Naive thymus-derived CD4-positive, alpha-beta T cell (primary cell): ENCODE measurements at regions of chr1 and their contacts with region 1.

Region 1: DNA sequence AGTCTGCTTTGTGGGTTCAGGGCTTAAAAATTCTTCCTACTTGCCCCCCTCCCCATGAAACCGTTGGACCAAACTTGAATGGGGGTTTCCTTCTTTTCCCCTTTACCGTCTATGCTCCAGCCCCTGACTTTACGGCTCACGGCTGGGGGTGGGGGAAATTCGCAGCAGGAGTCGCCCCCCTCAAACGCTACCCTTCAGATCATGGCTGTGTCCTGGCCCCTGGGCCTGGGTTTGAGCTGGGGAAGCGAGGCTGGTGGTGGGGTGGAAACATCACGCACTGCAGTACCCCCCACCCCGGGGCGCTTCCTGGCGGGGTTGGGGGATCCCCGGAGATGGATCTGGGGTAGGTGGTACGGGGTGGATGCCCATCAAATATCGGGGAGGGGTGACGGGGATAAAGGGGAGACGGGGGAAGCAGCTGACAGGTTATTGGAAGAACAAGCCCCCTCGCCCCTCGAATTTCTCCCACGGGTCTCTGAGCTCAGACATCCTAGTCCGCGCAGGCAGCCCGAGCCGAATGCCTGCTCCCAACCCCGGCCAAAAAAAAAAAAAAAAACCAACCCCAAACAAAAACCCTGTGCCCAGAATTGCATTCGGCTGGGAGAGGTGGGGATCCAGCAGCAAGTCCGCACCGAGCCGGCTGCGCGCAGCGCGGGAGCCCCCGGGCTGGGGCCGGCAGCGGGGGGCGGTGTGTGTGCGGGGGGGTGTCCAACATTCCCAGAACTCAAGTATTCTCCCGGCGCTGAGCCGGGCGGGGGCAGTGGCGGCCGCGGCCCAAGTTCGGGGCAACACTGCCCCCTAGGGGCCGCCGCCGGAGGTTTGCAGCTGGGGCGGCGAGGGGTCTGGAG is 59.0 kb upstream of the ACOT11 start:
- DNase-seq: peak; percentile 54 to 88 (median 73)
- ATAC-seq: peak; percentile 82
- H3K4me3 ChIP-seq: peak overlapping the region; percentile 83
- H3K4me3 Mint-ChIP-seq: peak overlapping the region; percentile 85 to 95 (median 90)
- H3K27ac ChIP-seq: peak overlapping the region; percentile 75
- H3K27ac Mint-ChIP-seq: peak overlapping the region; percentile 51 to 93 (median 78)
- H3K4me1 ChIP-seq: peaks cover 25 to 33% of the 10 kb centered on the region in 2 donors
- H3K4me1 Mint-ChIP-seq: peaks cover 26 to 55% (median 41%) of the 10 kb centered on the region in 7 donors
- H3K27me3 ChIP-seq: no peaks in the 10 kb centered on the region
- H3K27me3 Mint-ChIP-seq: peaks cover 0 to 38% (median 0%) of the 10 kb centered on the region in 5 donors

Region 2: GRCh38 chr1:53945433-53946251 is 543.4 kb before region 1 on chr1 and contains the start of gene IFT25:
- CTCF ChIA-PET with region 1: no interaction called
- POLR2A ChIA-PET with region 1: no interaction called
- intact Hi-C with region 1: loop called (anchors 5 kb)
- DNase-seq: peak; percentile 96 to 100 (median 99)
- ATAC-seq: peak; percentile 92
- H3K4me3 ChIP-seq: peak within 1 kb of the TSS; percentile 70
- H3K4me3 Mint-ChIP-seq: peak within 1 kb of the TSS; percentile 91 to 97 (median 96)
- H3K27ac ChIP-seq: peak within 1 kb of the TSS; percentile 83
- H3K27ac Mint-ChIP-seq: peak within 1 kb of the TSS; percentile 83 to 96 (median 93)
- H3K4me1 ChIP-seq: peaks cover 17 to 30% of the 10 kb centered on the region in 2 donors
- H3K4me1 Mint-ChIP-seq: peaks cover 33 to 64% (median 56%) of the 10 kb centered on the region in 7 donors
- H3K27me3 ChIP-seq: no peaks in the 10 kb centered on the region
- H3K27me3 Mint-ChIP-seq: no peaks in the 10 kb centered on the region
- total RNA-seq, gene IFT25: 17.5 to 59.9 (median 41.3) TPM

Region 3: GRCh38 chr1:54121482-54122134 is 367.4 kb before region 1 on chr1:
- CTCF ChIA-PET with region 1: interaction called, 8 read pairs
- POLR2A ChIA-PET with region 1: no interaction called
- intact Hi-C with region 1: loop called in 1 of 2 experiments (anchors 1 kb)
- DNase-seq: peak; percentile 42 to 75 (median 60)
- ATAC-seq: peak; percentile 81
- H3K4me3 ChIP-seq: no peak overlapping the region
- H3K4me3 Mint-ChIP-seq: peak overlapping the region in 8 of 10 donors; percentile 39 to 74 (median 68)
- H3K27ac ChIP-seq: no peak overlapping the region
- H3K27ac Mint-ChIP-seq: peak overlapping the region in 2 of 9 donors; percentile 14 to 67
- H3K4me1 ChIP-seq: no peaks in the 10 kb centered on the region
- H3K4me1 Mint-ChIP-seq: peaks cover 0 to 13% (median 6%) of the 10 kb centered on the region in 7 donors
- H3K27me3 ChIP-seq: no peaks in the 10 kb centered on the region
- H3K27me3 Mint-ChIP-seq: peaks cover 0 to 7% (median 0%) of the 10 kb centered on the region in 5 donors

Region 4: DNA sequence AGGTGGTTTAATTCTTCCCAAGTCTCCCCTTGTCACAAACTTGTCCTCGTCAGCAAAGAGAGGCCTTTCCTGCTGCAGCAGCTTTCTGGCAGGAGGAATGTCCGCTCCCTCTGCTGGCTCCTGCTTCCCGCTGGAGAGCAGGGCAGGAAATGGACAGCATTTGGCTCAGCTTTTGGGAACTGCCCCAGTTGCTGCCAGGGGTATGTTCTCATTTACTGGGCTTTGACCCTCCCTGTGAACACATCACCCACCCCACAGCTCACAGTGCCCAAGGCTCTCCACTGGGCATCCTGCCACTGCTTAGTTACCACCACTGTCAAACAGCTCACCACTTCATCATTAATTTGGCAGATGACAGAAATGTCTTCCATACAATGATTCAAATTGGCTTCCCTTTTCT is 213.7 kb before region 1 on chr1:
- CTCF ChIA-PET with region 1: interaction called, 3 read pairs
- POLR2A ChIA-PET with region 1: interaction called, 6 read pairs
- intact Hi-C with region 1: loop called in 1 of 2 experiments (anchors 1 kb)
- DNase-seq: no peak
- ATAC-seq: no peak
- H3K4me3 ChIP-seq: no peak overlapping the region
- H3K4me3 Mint-ChIP-seq: peak overlapping the region in 1 of 10 donors; percentile 33
- H3K27ac ChIP-seq: no peak overlapping the region
- H3K27ac Mint-ChIP-seq: peak overlapping the region in 5 of 9 donors; percentile 62 to 83 (median 75)
- H3K4me1 ChIP-seq: peaks cover 0 to 46% of the 10 kb centered on the region in 2 donors
- H3K4me1 Mint-ChIP-seq: peaks cover 25 to 76% (median 64%) of the 10 kb centered on the region in 7 donors
- H3K27me3 ChIP-seq: no peaks in the 10 kb centered on the region
- H3K27me3 Mint-ChIP-seq: no peaks in the 10 kb centered on the region

Region 5: DNA sequence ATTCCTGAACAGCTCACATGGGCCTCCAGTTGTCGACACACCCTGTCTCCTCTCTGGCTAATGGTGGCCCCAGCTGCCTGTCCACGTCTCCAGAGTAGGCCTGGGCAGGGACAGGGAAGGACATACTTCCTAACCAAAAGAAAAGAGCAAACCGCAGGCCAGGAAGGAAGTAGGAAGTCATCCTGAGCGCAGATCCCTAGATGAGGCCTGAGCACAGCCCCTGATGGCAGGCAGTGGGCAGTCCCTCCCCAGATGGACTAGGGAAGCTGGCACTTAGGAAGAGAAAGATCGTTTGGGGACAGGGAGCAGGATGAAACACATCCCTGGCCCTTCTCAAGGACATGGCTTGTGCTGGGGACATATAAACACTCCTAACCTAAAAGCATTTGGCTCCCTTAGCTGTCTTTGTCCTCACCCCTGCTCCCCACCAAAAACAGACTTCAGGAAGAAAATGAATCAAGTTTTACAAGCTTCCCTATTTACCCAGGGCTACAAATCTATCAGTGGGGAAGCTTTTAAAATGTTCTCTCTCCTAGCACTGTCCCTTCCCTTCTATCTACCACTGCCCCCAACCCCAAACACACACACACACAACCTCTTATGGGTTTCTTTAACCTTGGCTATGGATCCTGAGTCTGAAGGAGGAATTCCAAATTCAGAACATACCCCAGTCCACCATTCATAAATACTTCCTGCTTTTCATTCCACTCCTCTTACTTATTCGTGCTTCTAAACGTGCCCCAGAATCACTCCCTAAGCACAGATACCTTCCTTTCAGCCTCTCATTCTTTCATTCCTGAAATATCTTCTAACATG is 103.9 kb before region 1 on chr1:
- CTCF ChIA-PET with region 1: interaction called, 10 read pairs
- POLR2A ChIA-PET with region 1: no interaction called
- intact Hi-C with region 1: no loop called
- DNase-seq: no peak
- ATAC-seq: no peak
- H3K4me3 ChIP-seq: no peak overlapping the region
- H3K4me3 Mint-ChIP-seq: peak overlapping the region in 1 of 10 donors; percentile 18
- H3K27ac ChIP-seq: no peak overlapping the region
- H3K27ac Mint-ChIP-seq: peak overlapping the region; percentile 32 to 82 (median 57)
- H3K4me1 ChIP-seq: peaks cover 0 to 10% of the 10 kb centered on the region in 2 donors
- H3K4me1 Mint-ChIP-seq: peaks cover 32 to 82% (median 74%) of the 10 kb centered on the region in 7 donors
- H3K27me3 ChIP-seq: no peaks in the 10 kb centered on the region
- H3K27me3 Mint-ChIP-seq: no peaks in the 10 kb centered on the region

Region 6: GRCh38 chr1:54715493-54716298 is 226.7 kb after region 1 on chr1 and contains the start of gene TTC4:
- CTCF ChIA-PET with region 1: no interaction called
- POLR2A ChIA-PET with region 1: no interaction called
- intact Hi-C with region 1: loop called in 1 of 2 experiments (anchors 5 kb)
- DNase-seq: peak; percentile 71 to 92 (median 85)
- ATAC-seq: peak; percentile 99
- H3K4me3 ChIP-seq: peak within 1 kb of the TSS; percentile 86
- H3K4me3 Mint-ChIP-seq: peak within 1 kb of the TSS; percentile 81 to 96 (median 88)
- H3K27ac ChIP-seq: peak within 1 kb of the TSS; percentile 84
- H3K27ac Mint-ChIP-seq: peak within 1 kb of the TSS; percentile 58 to 94 (median 91)
- H3K4me1 ChIP-seq: peaks cover 14 to 15% of the 10 kb centered on the region in 2 donors
- H3K4me1 Mint-ChIP-seq: peaks cover 15 to 42% (median 34%) of the 10 kb centered on the region in 7 donors
- H3K27me3 ChIP-seq: no peaks in the 10 kb centered on the region
- H3K27me3 Mint-ChIP-seq: no peaks in the 10 kb centered on the region
- total RNA-seq, gene TTC4: 11.6 to 25.8 (median 21.4) TPM

Region 7: GRCh38 chr1:54810100-54810942 is 321.3 kb after region 1 on chr1:
- CTCF ChIA-PET with region 1: no interaction called
- POLR2A ChIA-PET with region 1: no interaction called
- intact Hi-C with region 1: no loop called
- DNase-seq: peak; percentile 11 to 69 (median 53)
- ATAC-seq: peak; percentile 69
- H3K4me3 ChIP-seq: no peak overlapping the region
- H3K4me3 Mint-ChIP-seq: no peak overlapping the region
- H3K27ac ChIP-seq: no peak overlapping the region
- H3K27ac Mint-ChIP-seq: peak overlapping the region in 1 of 9 donors; percentile 55
- H3K4me1 ChIP-seq: peaks cover 0 to 11% of the 10 kb centered on the region in 2 donors
- H3K4me1 Mint-ChIP-seq: peaks cover 0 to 29% (median 7%) of the 10 kb centered on the region in 7 donors
- H3K27me3 ChIP-seq: no peaks in the 10 kb centered on the region
- H3K27me3 Mint-ChIP-seq: no peaks in the 10 kb centered on the region

Region 8: DNA sequence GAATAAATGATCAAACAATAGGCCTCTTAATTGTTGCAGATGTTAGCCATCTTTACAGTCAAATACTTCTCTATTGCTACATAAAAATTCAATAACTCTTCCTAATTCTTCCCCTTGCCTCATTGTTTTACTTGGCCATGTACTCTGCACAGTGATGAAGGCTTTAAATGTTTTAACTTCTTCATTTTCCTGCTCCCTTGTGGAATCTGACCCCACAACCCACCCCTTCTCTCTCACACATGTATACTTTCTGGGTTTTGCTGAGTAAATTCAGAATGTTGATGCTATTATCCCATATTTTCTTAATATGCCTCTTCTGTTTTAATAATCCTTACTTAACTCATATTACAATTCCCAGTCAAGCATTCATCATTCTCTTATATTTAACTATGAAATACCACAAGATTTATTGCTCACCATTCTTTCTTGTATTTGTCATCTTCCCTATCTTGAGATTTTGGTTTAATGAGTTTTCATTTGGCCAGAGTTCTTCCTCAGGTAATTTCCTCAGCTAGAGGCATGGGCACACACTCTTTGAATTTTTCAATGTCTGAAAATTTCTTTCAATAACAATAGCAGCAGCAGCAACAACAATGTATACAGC is 1054.0 kb after region 1 on chr1:
- CTCF ChIA-PET with region 1: no interaction called
- POLR2A ChIA-PET with region 1: no interaction called
- intact Hi-C with region 1: no loop called
- DNase-seq: no peak
- ATAC-seq: no peak
- H3K4me3 ChIP-seq: no peak overlapping the region
- H3K4me3 Mint-ChIP-seq: no peak overlapping the region
- H3K27ac ChIP-seq: no peak overlapping the region
- H3K27ac Mint-ChIP-seq: no peak overlapping the region
- H3K4me1 ChIP-seq: no peaks in the 10 kb centered on the region
- H3K4me1 Mint-ChIP-seq: no peaks in the 10 kb centered on the region
- H3K27me3 ChIP-seq: no peaks in the 10 kb centered on the region
- H3K27me3 Mint-ChIP-seq: peaks cover 0 to 16% (median 14%) of the 10 kb centered on the region in 5 donors